ENCODE measurements at regions of chr3 and their contacts with region 1.

Region 1: DNA sequence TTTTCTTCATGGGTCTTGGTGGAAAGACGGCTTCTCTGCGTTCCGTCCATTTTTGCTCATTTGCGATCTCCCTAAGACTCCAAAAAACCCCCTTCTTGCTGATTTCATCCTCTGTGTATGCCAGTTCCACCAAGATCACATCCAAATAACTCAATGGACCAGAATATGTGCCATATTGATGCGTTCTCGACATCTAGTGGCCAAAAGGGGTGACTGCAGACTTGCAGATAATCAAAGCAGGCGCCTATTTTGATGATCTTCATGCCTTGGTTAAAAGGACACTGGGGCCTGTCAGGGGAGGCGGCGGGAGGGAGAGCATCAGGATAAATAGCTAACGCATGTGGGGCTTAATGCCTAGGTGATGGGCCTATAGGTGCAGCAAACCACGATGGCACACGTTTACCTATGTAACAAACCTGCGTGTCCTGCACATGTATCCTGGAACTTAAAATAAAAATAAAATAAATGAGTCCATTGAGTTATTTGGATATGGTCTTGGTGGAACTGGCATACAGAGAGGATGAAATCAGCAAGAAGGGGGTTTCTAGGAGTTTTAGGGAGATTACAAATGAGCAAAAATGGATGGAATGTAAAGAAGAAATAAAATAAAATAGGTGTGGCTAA is 104.2 kb upstream of the RAD18 start:
- DNase-seq: peak; percentile 56
- ATAC-seq: peak; percentile 63
- H3K4me3 Mint-ChIP-seq: no peak overlapping the region
- H3K27ac Mint-ChIP-seq: no peak overlapping the region
- H3K4me1 Mint-ChIP-seq: no peaks in the 10 kb centered on the region
- H3K27me3 Mint-ChIP-seq: no peaks in the 10 kb centered on the region

Region 2: GRCh38 chr3:8970971-8971589 is 96.4 kb before region 1 on chr3:
- CTCF ChIA-PET with region 1: interaction called, 4 read pairs
- POLR2A ChIA-PET with region 1: no interaction called
- intact Hi-C with region 1: loop called (anchors 1 kb)
- DNase-seq: peak; percentile 81
- ATAC-seq: peak; percentile 80
- H3K4me3 Mint-ChIP-seq: no peak overlapping the region
- H3K27ac Mint-ChIP-seq: no peak overlapping the region
- H3K4me1 Mint-ChIP-seq: peaks cover 2% of the 10 kb centered on the region
- H3K27me3 Mint-ChIP-seq: peaks cover 4% of the 10 kb centered on the region